Activated B cell treated with CpG ODN at 0.5 μM for 24 hours (primary cell): ENCODE measurements at regions of chr9 and their contacts with region 1.

Region 1: DNA sequence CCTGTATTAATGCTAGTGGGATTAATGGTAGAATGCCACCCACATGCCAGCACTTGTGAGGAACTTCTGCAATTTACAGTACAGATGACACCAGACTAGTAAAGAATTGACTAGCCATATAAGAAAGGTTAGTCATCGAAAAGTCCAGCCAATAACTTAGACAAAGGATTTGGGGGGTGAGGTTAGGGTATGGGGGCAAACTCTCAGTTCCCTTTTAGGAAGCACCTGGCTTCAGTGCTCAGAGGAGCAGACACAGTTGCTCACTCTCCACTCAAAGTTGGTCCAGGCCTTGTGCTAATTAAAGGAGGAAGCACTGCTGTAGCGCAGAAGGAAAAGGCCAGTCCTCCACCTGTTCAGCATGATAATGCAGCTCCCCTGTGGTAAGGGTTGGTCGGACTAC is 25.2 kb downstream of the TGFBR1 start:
- DNase-seq: no peak
- ATAC-seq: peak; percentile 94
- H3K4me3 Mint-ChIP-seq: peak overlapping the region; percentile 17
- H3K27ac Mint-ChIP-seq: peak overlapping the region; percentile 77
- H3K4me1 Mint-ChIP-seq: peaks cover 73% of the 10 kb centered on the region
- H3K27me3 Mint-ChIP-seq: no peaks in the 10 kb centered on the region
- CTCF ChIP-seq: no peak

Region 2: DNA sequence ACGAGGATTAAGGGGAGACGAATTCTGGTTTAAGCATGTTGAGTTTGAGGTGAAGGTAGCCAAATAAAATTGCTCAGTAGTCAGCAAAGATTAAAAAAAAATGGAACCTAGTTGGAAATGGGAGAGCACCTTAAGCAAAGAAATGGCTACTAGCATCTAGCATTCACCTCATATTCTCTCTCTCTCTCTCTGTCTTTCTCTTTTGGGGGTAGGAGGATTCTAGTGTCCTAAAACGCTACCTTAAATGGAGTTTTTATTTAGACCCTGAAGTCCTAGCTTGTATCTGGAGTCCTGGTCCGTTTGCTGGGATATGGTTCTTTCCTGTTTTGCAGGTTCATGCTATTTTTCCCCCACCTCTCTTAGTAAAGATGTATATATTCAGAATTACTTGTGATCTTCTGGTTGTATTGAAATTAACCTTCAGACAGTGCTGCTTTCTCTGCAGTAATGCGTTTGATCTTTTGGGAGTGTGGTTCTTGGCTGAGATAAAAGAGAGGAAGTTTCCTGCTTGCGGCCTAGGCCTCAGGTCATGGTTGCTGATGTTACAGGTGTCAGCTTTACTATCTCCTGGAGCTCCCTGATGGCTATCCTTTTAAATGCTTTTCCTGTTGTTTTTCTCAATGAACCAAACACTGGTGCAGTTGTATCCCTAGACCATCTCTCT is 17.2 kb before region 1 on chr9:
- CTCF ChIA-PET with region 1: interaction called, 3 read pairs
- POLR2A ChIA-PET with region 1: interaction called, 8 read pairs
- intact Hi-C with region 1: loop called (anchors 1 kb)
- DNase-seq: no peak
- ATAC-seq: peak; percentile 31
- H3K4me3 Mint-ChIP-seq: peak overlapping the region; percentile 11
- H3K27ac Mint-ChIP-seq: peak overlapping the region; percentile 74
- H3K4me1 Mint-ChIP-seq: peaks cover 80% of the 10 kb centered on the region
- H3K27me3 Mint-ChIP-seq: no peaks in the 10 kb centered on the region
- CTCF ChIP-seq: no peak

Region 3: DNA sequence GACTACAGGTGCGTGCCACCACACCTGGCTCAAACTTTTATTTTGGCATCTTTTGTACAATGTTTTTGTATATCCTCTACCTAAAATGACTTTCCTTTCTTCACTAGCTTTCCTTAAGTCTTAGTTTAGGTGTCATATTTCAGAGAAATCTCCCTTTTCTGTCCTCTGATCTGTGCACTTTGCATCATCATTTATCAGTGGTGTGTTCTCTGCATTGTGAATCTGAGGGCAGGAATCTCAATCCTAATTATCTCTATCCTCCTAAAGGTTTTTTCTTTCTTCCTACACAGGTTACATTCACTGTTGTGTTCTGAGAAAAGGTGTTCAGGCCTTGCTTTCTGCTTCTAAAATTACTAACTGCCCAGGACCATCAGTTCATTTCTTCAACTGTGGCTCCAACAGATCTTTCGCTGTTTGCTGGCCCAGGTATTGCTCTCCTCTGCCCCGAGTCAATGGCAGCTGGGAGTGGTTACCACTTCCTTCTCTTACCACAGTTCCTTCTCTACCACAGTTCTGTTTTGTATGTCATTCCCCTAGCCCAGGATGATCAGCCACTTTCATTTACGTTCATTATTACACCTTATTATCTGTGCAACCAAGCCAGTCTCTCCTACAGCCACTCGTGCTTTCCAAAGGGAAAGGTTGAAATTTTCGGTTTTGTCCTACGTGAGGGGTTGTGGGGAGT is 11.1 kb before region 1 on chr9:
- CTCF ChIA-PET with region 1: interaction called, 3 read pairs
- POLR2A ChIA-PET with region 1: interaction called, 8 read pairs
- intact Hi-C with region 1: loop called (anchors 1 kb)
- DNase-seq: no peak
- ATAC-seq: peak; percentile 97
- H3K4me3 Mint-ChIP-seq: peak overlapping the region; percentile 73
- H3K27ac Mint-ChIP-seq: peak overlapping the region; percentile 71
- H3K4me1 Mint-ChIP-seq: peaks cover 79% of the 10 kb centered on the region
- H3K27me3 Mint-ChIP-seq: no peaks in the 10 kb centered on the region
- CTCF ChIP-seq: no peak